Naive thymus-derived CD4-positive, alpha-beta T cell (primary cell): ENCODE measurements at regions of chr1 and their contacts with region 1.

Region 1: GRCh38 chr1:169794530-169795416 is at the start of gene METTL18:
- DNase-seq: peak; percentile 72 to 96 (median 92)
- ATAC-seq: peak; percentile 100
- H3K4me3 ChIP-seq: peak within 1 kb of the TSS; percentile 98
- H3K4me3 Mint-ChIP-seq: peak within 1 kb of the TSS; percentile 90 to 100 (median 100)
- H3K27ac ChIP-seq: peak within 1 kb of the TSS; percentile 94
- H3K27ac Mint-ChIP-seq: peak within 1 kb of the TSS; percentile 97 to 100 (median 99)
- H3K4me1 ChIP-seq: peaks cover 10 to 28% of the 10 kb centered on the region in 2 donors
- H3K4me1 Mint-ChIP-seq: peaks cover 26 to 60% (median 56%) of the 10 kb centered on the region in 7 donors
- H3K27me3 ChIP-seq: no peaks in the 10 kb centered on the region
- H3K27me3 Mint-ChIP-seq: no peaks in the 10 kb centered on the region
- total RNA-seq, gene METTL18: 4.9 to 21.1 (median 13.4) TPM

Region 2: DNA sequence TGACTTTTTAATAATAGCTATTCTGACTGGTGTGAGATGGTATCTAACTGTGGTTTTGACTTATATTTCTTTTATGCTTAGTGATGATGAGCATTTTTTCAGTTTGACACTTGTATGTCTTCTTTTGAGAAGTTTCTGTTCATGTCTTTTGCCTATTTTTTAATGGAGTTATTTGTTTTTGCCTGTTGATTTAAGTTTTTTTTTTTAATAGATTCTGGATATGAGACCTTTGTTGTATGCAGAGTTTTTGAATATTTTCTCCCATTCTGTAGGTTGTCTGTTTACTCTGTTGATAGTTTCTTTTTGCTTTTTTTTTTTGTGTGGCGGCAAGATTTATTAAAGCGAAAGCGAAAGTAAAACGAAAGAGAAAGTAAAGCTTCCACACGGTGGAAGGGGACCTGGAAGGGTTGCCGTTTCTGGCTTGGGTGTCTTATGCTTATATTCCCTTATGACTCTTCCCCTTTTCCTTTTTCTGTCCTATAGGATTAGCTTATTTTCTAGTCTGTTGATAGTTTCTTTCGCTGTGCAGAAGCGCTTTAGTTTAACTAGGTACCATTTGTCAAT is 1446.5 kb before region 1 on chr1:
- CTCF ChIA-PET with region 1: no interaction called
- POLR2A ChIA-PET with region 1: no interaction called
- intact Hi-C with region 1: loop called in 1 of 2 experiments (anchors 5 kb)
- DNase-seq: peak in 7 of 9 donors; percentile 15 to 52 (median 47)
- ATAC-seq: peak; percentile 45
- H3K4me3 ChIP-seq: peak overlapping the region; percentile 85
- H3K4me3 Mint-ChIP-seq: peak overlapping the region; percentile 74 to 97 (median 91)
- H3K27ac ChIP-seq: peak overlapping the region; percentile 62
- H3K27ac Mint-ChIP-seq: peak overlapping the region; percentile 90 to 95 (median 92)
- H3K4me1 ChIP-seq: peaks cover 0 to 3% of the 10 kb centered on the region in 2 donors
- H3K4me1 Mint-ChIP-seq: peaks cover 5 to 39% (median 31%) of the 10 kb centered on the region in 7 donors
- H3K27me3 ChIP-seq: no peaks in the 10 kb centered on the region
- H3K27me3 Mint-ChIP-seq: no peaks in the 10 kb centered on the region

Region 3: DNA sequence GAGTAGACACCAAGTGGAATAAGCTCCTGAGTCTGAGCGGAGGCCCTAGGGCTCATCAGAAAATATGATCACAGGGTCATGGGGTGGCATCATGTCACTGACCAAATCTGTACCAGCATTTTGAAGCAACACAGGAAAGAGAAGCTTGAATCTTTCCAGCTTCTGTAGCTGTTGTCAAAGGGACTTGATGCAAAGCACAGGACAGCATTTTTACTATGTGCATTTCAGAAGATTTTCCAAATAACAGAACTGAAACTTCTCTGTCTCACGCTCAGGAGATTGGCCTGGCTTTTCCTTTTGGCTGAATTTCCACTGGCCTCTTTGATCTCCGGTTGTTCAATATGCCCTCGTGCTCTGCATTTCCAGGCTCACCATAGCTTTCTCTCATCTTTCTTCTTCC is 815.5 kb before region 1 on chr1:
- CTCF ChIA-PET with region 1: no interaction called
- POLR2A ChIA-PET with region 1: no interaction called
- intact Hi-C with region 1: no loop called
- DNase-seq: no peak
- ATAC-seq: no peak
- H3K4me3 ChIP-seq: no peak overlapping the region
- H3K4me3 Mint-ChIP-seq: no peak overlapping the region
- H3K27ac ChIP-seq: no peak overlapping the region
- H3K27ac Mint-ChIP-seq: no peak overlapping the region
- H3K4me1 ChIP-seq: no peaks in the 10 kb centered on the region
- H3K4me1 Mint-ChIP-seq: peaks cover 0 to 2% (median 0%) of the 10 kb centered on the region in 7 donors
- H3K27me3 ChIP-seq: no peaks in the 10 kb centered on the region
- H3K27me3 Mint-ChIP-seq: no peaks in the 10 kb centered on the region

Region 4: GRCh38 chr1:169201084-169201619 is 593.6 kb before region 1 on chr1:
- CTCF ChIA-PET with region 1: no interaction called
- POLR2A ChIA-PET with region 1: no interaction called
- intact Hi-C with region 1: no loop called
- DNase-seq: no peak
- ATAC-seq: no peak
- H3K4me3 ChIP-seq: no peak overlapping the region
- H3K4me3 Mint-ChIP-seq: no peak overlapping the region
- H3K27ac ChIP-seq: no peak overlapping the region
- H3K27ac Mint-ChIP-seq: no peak overlapping the region
- H3K4me1 ChIP-seq: no peaks in the 10 kb centered on the region
- H3K4me1 Mint-ChIP-seq: peaks cover 0 to 2% (median 0%) of the 10 kb centered on the region in 7 donors
- H3K27me3 ChIP-seq: no peaks in the 10 kb centered on the region
- H3K27me3 Mint-ChIP-seq: no peaks in the 10 kb centered on the region

Region 5: DNA sequence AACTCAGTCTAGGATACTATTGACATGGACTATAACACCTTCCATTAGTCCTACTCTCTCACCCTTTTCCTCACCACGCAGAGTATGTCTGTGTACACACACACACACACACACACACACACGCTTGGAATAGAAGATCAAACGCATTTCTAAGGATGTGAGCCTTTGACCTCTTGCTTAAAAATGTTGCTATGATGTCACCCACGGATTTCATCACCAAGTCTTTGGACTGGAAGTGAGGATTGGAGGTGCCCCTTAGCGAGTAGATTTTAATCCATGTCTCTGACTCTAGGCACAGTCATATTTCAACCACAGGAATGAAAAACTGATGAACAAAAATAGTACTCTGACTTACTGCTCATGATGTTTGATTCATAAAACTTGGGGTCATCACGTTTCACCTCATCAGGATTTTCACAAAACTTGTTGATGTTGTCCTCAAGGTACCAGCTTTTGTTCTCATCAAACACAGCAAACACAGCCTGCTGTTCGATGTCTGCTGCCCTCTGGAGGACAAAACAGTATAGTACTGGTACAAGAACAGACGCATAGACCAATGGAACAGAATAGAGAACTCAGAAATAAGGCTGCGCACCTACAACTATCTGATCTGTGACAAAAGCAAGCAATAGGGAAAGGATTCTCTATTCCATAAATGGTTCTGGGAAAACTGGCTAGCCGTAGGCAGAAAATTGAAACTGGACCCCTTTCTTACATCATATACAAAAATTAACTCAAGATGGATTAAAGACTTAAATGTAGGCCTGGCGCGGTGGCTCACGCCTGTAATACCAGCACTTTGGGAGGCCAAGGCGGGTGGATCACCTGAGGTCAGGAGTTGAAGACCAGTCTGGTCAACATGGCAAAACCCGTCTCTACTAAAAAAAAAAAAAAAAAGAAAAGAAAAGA is 248.4 kb before region 1 on chr1:
- CTCF ChIA-PET with region 1: interaction called, 8 read pairs
- POLR2A ChIA-PET with region 1: no interaction called
- intact Hi-C with region 1: loop called in 1 of 2 experiments (anchors 1 kb)
- DNase-seq: peak in 7 of 9 donors; percentile 40 to 73 (median 68)
- ATAC-seq: peak; percentile 92
- H3K4me3 ChIP-seq: no peak overlapping the region
- H3K4me3 Mint-ChIP-seq: no peak overlapping the region
- H3K27ac ChIP-seq: no peak overlapping the region
- H3K27ac Mint-ChIP-seq: peak overlapping the region in 1 of 9 donors; percentile 7
- H3K4me1 ChIP-seq: no peaks in the 10 kb centered on the region
- H3K4me1 Mint-ChIP-seq: peaks cover 0 to 14% (median 0%) of the 10 kb centered on the region in 7 donors
- H3K27me3 ChIP-seq: no peaks in the 10 kb centered on the region
- H3K27me3 Mint-ChIP-seq: no peaks in the 10 kb centered on the region

Region 6: DNA sequence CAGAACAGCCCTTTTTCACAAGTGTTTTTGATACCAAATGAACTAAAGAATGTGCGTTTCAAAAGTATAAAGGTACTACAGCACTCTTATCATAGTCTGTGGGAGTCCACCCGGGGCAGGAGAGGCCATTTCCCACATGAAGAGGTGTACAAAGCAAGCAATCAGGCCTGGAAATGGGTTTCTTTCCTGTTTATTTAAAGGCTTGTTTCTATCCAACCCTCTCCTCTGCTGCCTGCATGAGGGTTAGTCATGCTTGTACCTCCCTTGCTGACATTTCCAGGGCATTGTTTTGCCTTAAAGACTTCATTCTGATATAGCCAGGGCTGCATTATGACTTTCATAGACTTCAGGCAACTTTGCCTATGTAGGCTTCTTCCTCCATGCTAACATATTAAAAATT is 176.4 kb before region 1 on chr1:
- CTCF ChIA-PET with region 1: no interaction called
- POLR2A ChIA-PET with region 1: no interaction called
- intact Hi-C with region 1: no loop called
- DNase-seq: no peak
- ATAC-seq: no peak
- H3K4me3 ChIP-seq: no peak overlapping the region
- H3K4me3 Mint-ChIP-seq: no peak overlapping the region
- H3K27ac ChIP-seq: no peak overlapping the region
- H3K27ac Mint-ChIP-seq: peak overlapping the region in 2 of 9 donors; percentile 3 to 76
- H3K4me1 ChIP-seq: peaks cover 4 to 8% of the 10 kb centered on the region in 2 donors
- H3K4me1 Mint-ChIP-seq: peaks cover 8 to 72% (median 51%) of the 10 kb centered on the region in 7 donors
- H3K27me3 ChIP-seq: no peaks in the 10 kb centered on the region
- H3K27me3 Mint-ChIP-seq: no peaks in the 10 kb centered on the region

Region 7: GRCh38 chr1:170074250-170075157 is 279.7 kb after region 1 on chr1 and contains the start of gene KIFAP3:
- CTCF ChIA-PET with region 1: no interaction called
- POLR2A ChIA-PET with region 1: no interaction called
- intact Hi-C with region 1: loop called (anchors 1 kb)
- DNase-seq: peak; percentile 84 to 94 (median 92)
- ATAC-seq: peak; percentile 96
- H3K4me3 ChIP-seq: peak within 1 kb of the TSS; percentile 76
- H3K4me3 Mint-ChIP-seq: peak within 1 kb of the TSS; percentile 89 to 99 (median 96)
- H3K27ac ChIP-seq: peak within 1 kb of the TSS; percentile 90
- H3K27ac Mint-ChIP-seq: peak within 1 kb of the TSS; percentile 83 to 98 (median 94)
- H3K4me1 ChIP-seq: peaks cover 15 to 37% of the 10 kb centered on the region in 2 donors
- H3K4me1 Mint-ChIP-seq: peaks cover 34 to 65% (median 57%) of the 10 kb centered on the region in 7 donors
- H3K27me3 ChIP-seq: no peaks in the 10 kb centered on the region
- H3K27me3 Mint-ChIP-seq: peaks cover 0 to 3% (median 0%) of the 10 kb centered on the region in 5 donors
- total RNA-seq, gene KIFAP3: 12.8 to 23.8 (median 20.1) TPM

Region 8: GRCh38 chr1:170531758-170532657 is 737.2 kb after region 1 on chr1 and contains the start of gene GORAB:
- CTCF ChIA-PET with region 1: no interaction called
- POLR2A ChIA-PET with region 1: no interaction called
- intact Hi-C with region 1: loop called (anchors 1 kb)
- DNase-seq: peak; percentile 74 to 87 (median 83)
- ATAC-seq: peak; percentile 97
- H3K4me3 ChIP-seq: peak within 1 kb of the TSS; percentile 95
- H3K4me3 Mint-ChIP-seq: no peak within 1 kb of the TSS
- H3K27ac ChIP-seq: peak within 1 kb of the TSS; percentile 91
- H3K27ac Mint-ChIP-seq: peak within 1 kb of the TSS in 1 of 9 donors; percentile 36
- H3K4me1 ChIP-seq: peaks cover 8 to 14% of the 10 kb centered on the region in 2 donors
- H3K4me1 Mint-ChIP-seq: peaks cover 7 to 29% (median 19%) of the 10 kb centered on the region in 7 donors
- H3K27me3 ChIP-seq: no peaks in the 10 kb centered on the region
- H3K27me3 Mint-ChIP-seq: peaks cover 0 to 20% (median 0%) of the 10 kb centered on the region in 5 donors
- total RNA-seq, gene GORAB: 10.9 to 25.3 (median 22.7) TPM